CD4-positive, alpha-beta T cell (primary cell): ENCODE measurements at regions of chrX and their contacts with region 1.

Region 1: DNA sequence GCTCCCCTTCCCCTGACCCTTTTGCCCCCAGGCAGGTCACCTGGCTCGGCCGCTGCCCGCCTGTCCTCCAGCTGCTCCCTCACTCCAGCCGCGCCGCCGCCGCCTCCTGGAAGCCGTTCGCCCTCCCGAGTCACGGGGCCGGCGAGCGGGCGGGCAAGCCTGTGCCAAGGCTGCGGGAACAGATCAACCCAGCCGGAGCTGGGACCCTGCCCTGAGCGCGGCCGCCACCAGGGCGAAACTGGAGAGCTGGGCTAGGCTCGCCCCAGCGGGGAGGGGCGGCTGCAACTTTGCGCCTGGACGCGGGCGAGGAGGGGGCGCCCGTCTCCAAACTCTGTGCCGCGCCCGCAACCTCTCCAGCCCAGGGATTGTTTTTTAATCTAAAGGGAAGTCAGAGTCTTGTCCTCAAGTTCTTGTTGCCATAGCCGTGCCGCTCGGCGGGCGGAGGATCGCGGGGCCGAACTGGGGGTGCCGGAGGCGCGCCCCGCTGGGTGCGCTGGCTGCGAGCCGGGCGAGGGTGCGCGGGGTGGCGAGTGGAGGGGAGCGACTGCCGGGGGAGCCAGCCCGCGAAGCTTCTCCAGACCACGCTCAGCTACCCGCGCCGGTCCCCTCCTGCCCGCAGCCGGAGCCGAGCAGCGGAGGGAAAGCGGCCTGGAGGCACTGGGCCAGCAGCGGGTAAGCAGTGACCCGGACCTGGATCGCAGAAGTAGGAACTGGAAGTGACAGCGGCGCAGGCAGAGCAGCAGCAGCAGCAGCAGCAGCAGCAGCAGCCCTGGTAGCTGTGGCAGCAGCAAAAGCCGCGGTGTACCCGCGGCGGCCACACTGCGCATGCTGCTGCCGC is 13.4 kb downstream of the ARHGEF6 start:
- DNase-seq: peak in 13 of 14 experiments; percentile 28 to 78 (median 39)
- ATAC-seq: peak; percentile 77
- H3K4me3 ChIP-seq: peak overlapping the region; percentile 59
- H3K4me3 Mint-ChIP-seq: peak overlapping the region; percentile 87
- H3K27ac ChIP-seq: peak overlapping the region in 1 of 2 donors; percentile 53
- H3K27ac Mint-ChIP-seq: peak overlapping the region; percentile 93
- H3K4me1 ChIP-seq: peaks cover 50% of the 10 kb centered on the region
- H3K4me1 Mint-ChIP-seq: peaks cover 77% of the 10 kb centered on the region
- H3K27me3 ChIP-seq: no peaks in the 10 kb centered on the region
- H3K27me3 Mint-ChIP-seq: no peaks in the 10 kb centered on the region
- CTCF ChIP-seq: no peak

Region 2: DNA sequence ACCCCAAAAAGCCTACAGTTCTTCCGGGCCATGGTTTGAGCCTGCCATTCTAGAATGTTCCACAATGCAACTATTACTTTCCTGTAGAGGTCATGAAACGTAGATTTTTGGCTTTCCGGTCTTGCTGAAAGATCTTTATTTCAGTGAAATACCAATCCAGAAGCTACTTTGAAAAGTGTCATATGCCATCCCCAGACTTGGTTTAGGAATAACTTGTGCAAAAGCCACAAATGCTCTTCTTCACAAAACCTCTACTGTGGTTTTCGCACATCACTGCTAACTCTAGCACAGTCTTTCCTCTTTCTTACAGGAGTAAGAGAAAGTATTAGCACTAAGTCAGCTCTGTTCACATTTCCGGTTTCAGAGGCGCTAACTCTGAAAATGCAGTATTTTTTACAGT is 132.1 kb before region 1 on chrX:
- CTCF ChIA-PET with region 1: no interaction called
- POLR2A ChIA-PET with region 1: no interaction called
- intact Hi-C with region 1: no loop called
- DNase-seq: peak in 4 of 14 experiments; percentile 28 to 76 (median 70)
- ATAC-seq: peak; percentile 80
- H3K4me3 ChIP-seq: peak overlapping the region; percentile 27
- H3K4me3 Mint-ChIP-seq: peak overlapping the region; percentile 58
- H3K27ac ChIP-seq: peak overlapping the region; percentile 39 to 47
- H3K27ac Mint-ChIP-seq: peak overlapping the region; percentile 88
- H3K4me1 ChIP-seq: peaks cover 83% of the 10 kb centered on the region
- H3K4me1 Mint-ChIP-seq: peaks cover 88% of the 10 kb centered on the region
- H3K27me3 ChIP-seq: no peaks in the 10 kb centered on the region
- H3K27me3 Mint-ChIP-seq: no peaks in the 10 kb centered on the region
- CTCF ChIP-seq: no peak

Region 3: DNA sequence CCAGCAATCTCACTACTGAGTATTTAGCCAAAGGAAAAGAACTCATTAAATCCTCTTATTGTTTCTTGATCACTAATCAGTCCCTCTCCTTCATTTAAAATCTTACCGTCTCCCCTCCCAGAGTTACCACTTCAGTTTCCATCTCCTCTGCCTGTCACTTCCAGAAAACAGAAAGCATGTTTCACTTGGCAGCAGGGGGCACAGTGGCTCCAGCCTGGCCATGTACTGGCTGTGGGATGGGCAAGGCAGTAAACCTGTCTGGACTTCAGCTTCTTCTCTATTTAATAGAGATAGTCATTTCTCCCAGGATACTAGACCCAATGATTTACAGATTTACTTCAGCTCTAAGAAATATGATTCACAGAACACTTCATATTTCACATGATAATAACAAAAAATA is 56.2 kb before region 1 on chrX:
- CTCF ChIA-PET with region 1: interaction called, 3 read pairs
- POLR2A ChIA-PET with region 1: no interaction called
- intact Hi-C with region 1: loop called in 1 of 2 experiments (anchors 10 kb)
- DNase-seq: peak in 5 of 14 experiments; percentile 8 to 50 (median 39)
- ATAC-seq: no peak
- H3K4me3 ChIP-seq: no peak overlapping the region
- H3K4me3 Mint-ChIP-seq: no peak overlapping the region
- H3K27ac ChIP-seq: peak overlapping the region in 1 of 2 donors; percentile 59
- H3K27ac Mint-ChIP-seq: peak overlapping the region; percentile 96
- H3K4me1 ChIP-seq: peaks cover 36% of the 10 kb centered on the region
- H3K4me1 Mint-ChIP-seq: peaks cover 50% of the 10 kb centered on the region
- H3K27me3 ChIP-seq: no peaks in the 10 kb centered on the region
- H3K27me3 Mint-ChIP-seq: no peaks in the 10 kb centered on the region
- CTCF ChIP-seq: no peak

Region 4: GRCh38 chrX:136780763-136781162 is 13.4 kb after region 1 on chrX and contains the start of gene ARHGEF6:
- CTCF ChIA-PET with region 1: interaction called, 18 read pairs
- POLR2A ChIA-PET with region 1: interaction called, 43 read pairs
- intact Hi-C with region 1: loop called (anchors 1 to 2 kb)
- DNase-seq: peak in 12 of 14 experiments; percentile 9 to 66 (median 38)
- ATAC-seq: peak; percentile 60
- H3K4me3 ChIP-seq: peak within 1 kb of the TSS; percentile 79
- H3K4me3 Mint-ChIP-seq: peak within 1 kb of the TSS; percentile 98
- H3K27ac ChIP-seq: peak within 1 kb of the TSS; percentile 65 to 84
- H3K27ac Mint-ChIP-seq: peak within 1 kb of the TSS; percentile 95
- H3K4me1 ChIP-seq: peaks cover 29% of the 10 kb centered on the region
- H3K4me1 Mint-ChIP-seq: peaks cover 75% of the 10 kb centered on the region
- H3K27me3 ChIP-seq: no peaks in the 10 kb centered on the region
- H3K27me3 Mint-ChIP-seq: no peaks in the 10 kb centered on the region
- CTCF ChIP-seq: no peak
- total RNA-seq, gene ARHGEF6: 43.3 to 45.3 TPM